Common myeloid progenitor, CD34-positive (primary cell): ENCODE measurements at regions of chr2 and their contacts with region 1.

Region 1: DNA sequence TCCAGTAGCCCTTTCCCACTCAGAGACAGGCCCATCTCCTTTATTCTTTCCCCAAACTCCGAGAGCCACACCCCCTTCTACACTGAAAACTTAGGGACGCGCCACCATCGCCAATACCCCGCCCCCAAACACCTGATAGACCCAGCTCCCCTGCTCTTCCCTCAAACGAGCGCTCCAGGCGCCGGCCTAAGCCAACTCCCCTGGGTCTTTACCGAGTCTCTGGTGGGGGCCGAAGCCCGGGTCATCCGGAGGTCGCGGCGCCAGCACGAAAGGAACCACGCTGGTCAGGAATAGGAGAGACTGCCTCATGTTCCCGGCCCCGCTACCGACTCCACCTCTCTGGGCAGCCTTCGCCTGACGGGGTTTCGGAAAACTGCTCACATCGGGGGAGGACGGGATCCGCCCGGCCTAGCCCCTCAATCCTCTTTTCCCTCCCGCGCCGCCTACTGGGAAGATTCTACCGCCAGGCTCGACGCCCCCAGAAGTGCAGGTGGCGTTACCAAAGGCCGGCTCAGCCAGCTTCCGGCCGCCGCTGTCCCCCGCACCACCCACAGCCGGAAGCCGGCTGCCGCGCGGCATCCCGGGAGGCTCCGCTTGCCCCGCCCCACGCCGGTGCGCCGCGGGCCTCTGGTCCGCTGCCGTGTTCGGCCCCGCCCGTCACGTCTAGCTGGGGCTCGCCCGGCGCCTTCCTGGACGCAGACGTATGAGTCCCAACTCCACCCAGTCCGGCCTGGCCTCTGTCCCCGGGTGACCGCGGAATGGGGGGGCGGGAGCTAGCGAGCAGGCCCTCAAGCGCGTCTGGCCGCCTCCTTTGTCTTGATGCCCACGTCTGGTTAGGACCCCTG is at the start of gene ADAM17:
- DNase-seq: peak; percentile 89 to 95 (median 89)
- H3K4me3 ChIP-seq: peak within 1 kb of the TSS; percentile 82 to 98 (median 91)
- H3K27ac ChIP-seq: peak within 1 kb of the TSS; percentile 94 to 97
- H3K4me1 ChIP-seq: peaks cover 28 to 53% (median 36%) of the 10 kb centered on the region in 4 experiments
- H3K27me3 ChIP-seq: no peaks in the 10 kb centered on the region

Region 2: DNA sequence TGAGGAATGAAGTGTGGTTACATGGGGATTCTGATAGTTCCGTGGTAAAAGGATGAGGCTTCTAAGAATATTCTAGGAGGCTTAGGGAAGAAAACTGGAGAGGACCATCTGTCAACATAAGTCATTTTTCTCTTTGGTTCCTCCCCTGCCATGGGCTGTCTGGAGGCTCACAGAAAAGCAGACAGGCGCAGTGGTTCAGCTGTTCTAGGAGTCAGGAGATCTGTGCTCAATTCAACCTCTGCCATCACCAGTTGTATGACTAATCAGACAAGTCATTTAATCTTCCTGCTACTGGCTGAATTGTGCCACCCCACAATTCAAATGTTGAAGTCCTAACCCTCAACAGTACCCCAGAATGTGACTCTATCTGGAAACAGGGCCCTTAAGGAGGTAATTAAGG is 36.3 kb before region 1 on chr2:
- CTCF ChIA-PET with region 1: interaction called, 10 read pairs
- POLR2A ChIA-PET with region 1: interaction called, 4 read pairs
- DNase-seq: no peak
- H3K4me3 ChIP-seq: no peak overlapping the region
- H3K27ac ChIP-seq: no peak overlapping the region
- H3K4me1 ChIP-seq: no peaks in the 10 kb centered on the region
- H3K27me3 ChIP-seq: no peaks in the 10 kb centered on the region

Region 3: GRCh38 chr2:9538000-9538507 is 17.5 kb before region 1 on chr2:
- CTCF ChIA-PET with region 1: interaction called, 27 read pairs
- POLR2A ChIA-PET with region 1: interaction called, 25 read pairs
- DNase-seq: peak; percentile 74 to 83 (median 77)
- H3K4me3 ChIP-seq: peak overlapping the region in 3 of 7 experiments; percentile 39 to 57 (median 48)
- H3K27ac ChIP-seq: peak overlapping the region; percentile 83 to 93
- H3K4me1 ChIP-seq: peaks cover 11 to 46% (median 33%) of the 10 kb centered on the region in 4 experiments
- H3K27me3 ChIP-seq: no peaks in the 10 kb centered on the region

Region 4: DNA sequence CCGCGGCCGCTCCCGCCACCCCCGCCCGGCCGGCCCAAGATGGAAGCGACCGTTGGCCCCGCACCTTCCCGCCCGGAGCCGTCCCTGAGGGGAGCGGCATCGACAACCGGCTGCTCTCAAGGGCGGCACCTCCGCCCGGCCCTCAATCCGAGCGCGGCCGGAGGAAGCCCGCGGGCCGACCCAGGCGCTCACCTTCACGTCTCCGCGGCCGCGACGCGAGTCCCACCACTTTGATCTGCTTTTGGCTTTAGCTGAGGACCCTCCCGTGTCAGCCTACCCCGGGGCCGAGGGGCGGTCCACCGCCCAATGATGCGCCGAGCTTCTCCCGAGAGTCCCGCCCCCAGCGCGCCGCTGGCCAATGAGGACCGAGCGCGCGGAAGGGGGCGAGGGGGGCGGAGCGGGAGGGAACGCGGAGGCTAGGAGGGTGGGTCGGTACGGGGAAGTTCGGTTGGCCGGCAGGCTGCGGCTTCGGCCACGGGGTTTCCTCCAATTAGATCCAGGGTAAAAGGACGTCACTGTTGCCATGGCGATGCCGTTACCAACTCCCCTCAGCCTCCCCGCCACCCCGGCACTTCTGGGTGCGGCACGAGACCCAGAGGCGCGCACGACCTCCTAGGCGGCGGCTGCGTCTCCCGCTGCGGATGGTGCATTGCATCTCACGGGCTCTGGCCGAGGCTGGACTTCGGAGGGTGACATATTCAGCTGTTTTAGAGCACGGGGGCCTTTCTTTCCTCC is 75.4 kb after region 1 on chr2 and contains the start of gene YWHAQ:
- CTCF ChIA-PET with region 1: no interaction called
- POLR2A ChIA-PET with region 1: interaction called, 15 read pairs
- DNase-seq: peak; percentile 99
- H3K4me3 ChIP-seq: peak within 1 kb of the TSS; percentile 89 to 98 (median 96)
- H3K27ac ChIP-seq: peak within 1 kb of the TSS; percentile 87 to 89
- H3K4me1 ChIP-seq: peaks cover 14 to 36% (median 26%) of the 10 kb centered on the region in 4 experiments
- H3K27me3 ChIP-seq: no peaks in the 10 kb centered on the region